ENCODE measurements at regions of chr6 and their contacts with region 1.

Region 1: DNA sequence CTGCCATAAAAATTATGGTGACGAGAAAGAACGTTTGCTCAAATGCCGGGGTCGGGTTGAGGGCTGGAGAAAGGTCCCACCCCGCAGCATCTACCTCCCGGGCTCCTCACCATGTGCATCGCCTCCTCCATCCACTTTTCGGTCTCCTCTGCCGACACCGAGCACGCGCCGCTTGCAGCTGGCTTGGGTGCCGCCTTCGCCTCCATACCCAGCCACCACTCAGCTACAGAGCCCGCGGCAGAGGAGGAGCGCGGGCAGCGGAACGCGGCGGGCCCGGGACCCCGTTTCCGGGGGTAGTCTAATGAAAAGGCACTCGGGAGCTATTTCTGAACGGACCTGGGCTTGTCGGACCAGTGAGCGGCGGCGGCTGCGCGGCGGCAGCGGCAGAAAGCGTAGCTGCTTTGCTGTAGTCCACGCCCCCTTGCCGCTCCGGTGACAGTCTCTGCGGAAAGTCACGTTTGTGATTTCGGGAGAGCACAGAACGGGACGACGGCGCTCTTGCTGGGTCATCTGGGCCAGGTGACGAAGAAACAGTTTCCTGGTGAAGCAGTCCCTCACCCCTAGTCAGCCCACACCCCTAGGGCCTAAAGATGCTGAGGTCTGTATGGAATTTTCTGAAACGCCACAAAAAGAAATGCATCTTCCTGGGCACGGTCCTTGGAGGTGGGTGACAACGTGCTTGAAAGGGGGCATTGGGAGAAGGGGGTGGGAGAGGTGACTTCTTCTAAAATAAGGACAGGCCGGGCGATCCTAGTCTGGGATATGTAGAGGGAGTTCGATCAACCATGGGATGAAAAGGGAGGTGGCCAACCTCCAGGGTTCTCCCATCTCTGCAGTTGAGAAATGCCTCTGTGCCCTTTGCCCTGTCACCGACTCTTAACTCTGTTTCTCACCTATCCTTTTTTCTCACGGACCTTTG is at the starts of genes ADAT2 and PEX3:
- DNase-seq: peak; percentile 96
- H3K4me3 Mint-ChIP-seq: peak within 1 kb of the TSS; percentile 100
- H3K27ac Mint-ChIP-seq: peak within 1 kb of the TSS; percentile 97
- H3K4me1 Mint-ChIP-seq: peaks cover 50% of the 10 kb centered on the region
- H3K27me3 Mint-ChIP-seq: no peaks in the 10 kb centered on the region
- total RNA-seq, gene ADAT2: 36.8 to 39.5 TPM
- total RNA-seq, gene PEX3: 10.8 to 11.9 TPM

Region 2: DNA sequence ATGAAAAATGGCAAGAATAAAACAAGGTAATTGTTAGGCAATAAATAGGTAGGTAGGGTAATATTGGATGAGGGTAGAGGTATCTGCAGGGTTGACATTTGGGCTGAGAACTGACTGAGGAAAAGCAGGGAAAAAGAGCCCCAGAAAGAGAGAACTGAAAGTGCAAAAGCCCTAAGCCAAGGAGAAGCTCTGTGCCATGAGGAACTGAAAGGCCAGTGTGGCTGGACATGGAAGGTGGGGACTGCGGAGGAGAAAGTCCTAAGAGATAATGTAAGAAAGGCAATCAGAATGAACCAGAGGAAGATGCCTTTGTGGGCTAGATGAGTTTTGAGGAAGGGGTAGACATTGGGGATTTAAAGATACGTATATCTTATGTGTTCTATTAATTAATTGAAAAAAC is 495.9 kb before region 1 on chr6:
- CTCF ChIA-PET with region 1: no interaction called
- intact Hi-C with region 1: no loop called
- DNase-seq: no peak
- H3K4me3 Mint-ChIP-seq: no peak overlapping the region
- H3K27ac Mint-ChIP-seq: no peak overlapping the region
- H3K4me1 Mint-ChIP-seq: peaks cover 19% of the 10 kb centered on the region
- H3K27me3 Mint-ChIP-seq: no peaks in the 10 kb centered on the region

Region 3: GRCh38 chr6:143536865-143537691 is 86.4 kb after region 1 on chr6:
- CTCF ChIA-PET with region 1: no interaction called
- intact Hi-C with region 1: loop called (anchors 2 kb)
- DNase-seq: peak; percentile 71
- H3K4me3 Mint-ChIP-seq: peak overlapping the region; percentile 76
- H3K27ac Mint-ChIP-seq: peak overlapping the region; percentile 15
- H3K4me1 Mint-ChIP-seq: peaks cover 35% of the 10 kb centered on the region
- H3K27me3 Mint-ChIP-seq: no peaks in the 10 kb centered on the region

Region 4: DNA sequence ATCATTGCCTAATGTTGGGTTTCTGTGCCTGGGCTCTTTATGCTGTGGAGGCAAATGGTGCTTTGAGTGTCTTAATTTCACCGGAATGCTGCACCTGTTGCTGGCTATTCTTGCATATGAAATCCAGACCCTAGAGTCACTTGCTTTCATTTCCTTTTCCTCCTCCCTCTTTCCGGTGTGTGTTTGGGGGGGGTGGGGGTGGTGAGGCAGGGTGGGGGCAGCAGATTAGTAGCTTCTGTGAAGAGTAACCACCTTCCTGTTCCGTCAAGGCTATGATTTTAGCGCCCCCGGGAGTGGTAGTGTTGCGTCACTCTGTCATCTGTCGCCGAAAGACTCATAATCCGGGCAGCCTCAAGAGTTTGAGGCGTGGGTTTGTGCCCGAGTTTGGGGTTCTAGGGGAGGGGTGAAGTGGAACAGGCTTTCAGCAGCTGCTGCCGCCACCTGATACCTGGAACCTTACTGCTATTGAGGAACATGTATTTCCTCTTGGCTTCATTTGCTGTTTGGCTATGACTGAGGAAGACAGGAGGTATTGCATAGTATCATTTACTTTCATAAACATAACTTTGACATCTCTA is 883.5 kb after region 1 on chr6:
- CTCF ChIA-PET with region 1: no interaction called
- intact Hi-C with region 1: loop called (anchors 10 kb)
- DNase-seq: peak; percentile 83
- H3K4me3 Mint-ChIP-seq: peak overlapping the region; percentile 59
- H3K27ac Mint-ChIP-seq: peak overlapping the region; percentile 50
- H3K4me1 Mint-ChIP-seq: peaks cover 45% of the 10 kb centered on the region
- H3K27me3 Mint-ChIP-seq: no peaks in the 10 kb centered on the region

Region 5: DNA sequence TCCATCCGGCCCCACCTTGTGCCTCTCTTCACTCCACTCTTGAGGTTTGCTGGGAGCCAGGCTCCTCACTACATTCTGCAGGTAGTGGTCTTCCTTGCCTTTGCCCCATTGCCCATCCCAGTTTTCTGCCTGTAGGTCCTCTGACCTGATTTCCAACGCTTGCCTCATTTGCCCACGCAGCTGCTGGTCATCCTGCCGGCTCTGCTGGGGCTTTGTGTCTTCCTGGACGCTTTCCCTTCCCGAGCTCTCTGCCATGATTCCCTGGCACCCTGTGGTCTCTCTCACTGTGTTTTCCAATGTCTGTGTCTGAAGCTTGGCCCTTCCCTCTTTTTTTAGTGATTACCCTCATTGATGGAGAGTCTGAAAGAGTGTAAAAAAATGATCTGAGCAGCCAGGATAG is 1286.1 kb after region 1 on chr6:
- CTCF ChIA-PET with region 1: no interaction called
- intact Hi-C with region 1: no loop called
- DNase-seq: no peak
- H3K4me3 Mint-ChIP-seq: no peak overlapping the region
- H3K27ac Mint-ChIP-seq: no peak overlapping the region
- H3K4me1 Mint-ChIP-seq: no peaks in the 10 kb centered on the region
- H3K27me3 Mint-ChIP-seq: no peaks in the 10 kb centered on the region

Measured in activated naive CD4-positive, alpha-beta T cell treated with anti-CD3 and anti-CD28 coated beads for 36 hours (primary cell).